Right cardiac atrium (tissue), 5 donors: ENCODE measurements at regions of chr15 and their contacts with region 1.

Region 1: GRCh38 chr15:91192690-91193377 is 92.8 kb downstream of the SV2B start:
- DNase-seq: no peak
- ATAC-seq: no peak
- H3K4me3 ChIP-seq: no peak overlapping the region
- H3K27ac ChIP-seq: no peak overlapping the region
- H3K4me1 ChIP-seq: no peaks in the 10 kb centered on the region
- H3K27me3 ChIP-seq: no peaks in the 10 kb centered on the region

Region 2: GRCh38 chr15:91142114-91142731 is 50.6 kb before region 1 on chr15:
- intact Hi-C with region 1: loop called in 1 of 4 experiments (anchors 10 kb)
- DNase-seq: no peak
- ATAC-seq: no peak
- H3K4me3 ChIP-seq: no peak overlapping the region
- H3K27ac ChIP-seq: no peak overlapping the region
- H3K4me1 ChIP-seq: no peaks in the 10 kb centered on the region
- H3K27me3 ChIP-seq: no peaks in the 10 kb centered on the region